ENCODE measurements at regions of chr2 and their contacts with region 1.

Region 1: GRCh38 chr2:197268786-197269584 is 41.6 kb downstream of the ANKRD44 start:
- DNase-seq: no peak
- ATAC-seq: peak in 1 of 2 donors; percentile 35
- H3K4me3 ChIP-seq: no peak overlapping the region
- H3K27ac ChIP-seq: no peak overlapping the region
- H3K4me1 ChIP-seq: peaks cover 10 to 11% of the 10 kb centered on the region in 2 donors
- H3K27me3 ChIP-seq: no peaks in the 10 kb centered on the region
- CTCF ChIP-seq: no peak
- POLR2A ChIP-seq: no peak

Region 2: DNA sequence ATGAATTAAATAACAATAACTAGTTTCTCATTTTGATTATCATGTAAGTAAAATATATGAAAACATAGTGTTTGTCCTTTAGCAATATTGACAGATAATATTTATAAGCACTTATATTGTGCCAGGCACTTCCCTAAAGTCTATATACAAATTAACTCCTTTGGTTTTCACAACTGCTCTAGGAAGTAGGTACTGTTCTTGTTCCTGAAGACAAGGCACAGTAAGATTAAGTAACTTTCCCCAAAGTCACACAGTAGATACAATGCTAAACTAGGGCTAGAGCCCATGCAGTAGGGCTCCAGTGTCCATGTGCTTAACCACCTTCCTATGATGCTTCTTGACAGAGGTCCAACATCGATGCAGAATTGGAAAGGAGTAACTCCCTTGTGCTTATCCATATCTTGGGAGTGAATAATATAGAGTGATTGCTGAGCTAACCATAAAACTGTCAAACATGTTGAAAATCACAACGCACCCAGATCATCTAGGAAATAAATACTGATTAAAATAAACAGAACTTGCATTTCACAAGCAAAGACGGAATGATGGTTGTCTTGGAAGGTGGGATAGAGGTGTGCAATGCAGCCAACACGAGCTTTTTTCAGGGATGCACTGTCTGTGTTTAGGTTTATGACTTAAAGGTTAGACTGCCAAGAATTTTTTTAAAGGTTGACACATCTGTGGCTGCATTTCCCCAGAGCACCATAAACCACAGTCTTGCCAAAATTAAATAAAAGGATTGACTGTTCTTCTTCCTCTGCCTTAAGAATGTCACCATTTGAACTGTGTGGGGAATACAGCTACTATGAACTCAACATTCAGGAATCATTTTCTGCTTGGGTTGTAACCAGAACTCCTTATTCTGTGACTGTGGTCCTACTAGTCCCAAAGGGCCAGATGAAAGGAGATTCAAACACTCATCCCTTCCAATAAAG is 39.2 kb before region 1 on chr2:
- in situ Hi-C with region 1: loop called in 1 of 4 experiments (anchors 5 kb)
- intact Hi-C with region 1: no loop called
- DNase-seq: no peak
- ATAC-seq: no peak
- H3K4me3 ChIP-seq: no peak overlapping the region
- H3K27ac ChIP-seq: no peak overlapping the region
- H3K4me1 ChIP-seq: no peaks in the 10 kb centered on the region
- H3K27me3 ChIP-seq: no peaks in the 10 kb centered on the region
- CTCF ChIP-seq: no peak
- POLR2A ChIP-seq: no peak

Measured in gastrocnemius medialis (tissue), 4 donors.